Panc1 (cell line): ENCODE measurements at regions of chr10 and their contacts with region 1.

Region 1: DNA sequence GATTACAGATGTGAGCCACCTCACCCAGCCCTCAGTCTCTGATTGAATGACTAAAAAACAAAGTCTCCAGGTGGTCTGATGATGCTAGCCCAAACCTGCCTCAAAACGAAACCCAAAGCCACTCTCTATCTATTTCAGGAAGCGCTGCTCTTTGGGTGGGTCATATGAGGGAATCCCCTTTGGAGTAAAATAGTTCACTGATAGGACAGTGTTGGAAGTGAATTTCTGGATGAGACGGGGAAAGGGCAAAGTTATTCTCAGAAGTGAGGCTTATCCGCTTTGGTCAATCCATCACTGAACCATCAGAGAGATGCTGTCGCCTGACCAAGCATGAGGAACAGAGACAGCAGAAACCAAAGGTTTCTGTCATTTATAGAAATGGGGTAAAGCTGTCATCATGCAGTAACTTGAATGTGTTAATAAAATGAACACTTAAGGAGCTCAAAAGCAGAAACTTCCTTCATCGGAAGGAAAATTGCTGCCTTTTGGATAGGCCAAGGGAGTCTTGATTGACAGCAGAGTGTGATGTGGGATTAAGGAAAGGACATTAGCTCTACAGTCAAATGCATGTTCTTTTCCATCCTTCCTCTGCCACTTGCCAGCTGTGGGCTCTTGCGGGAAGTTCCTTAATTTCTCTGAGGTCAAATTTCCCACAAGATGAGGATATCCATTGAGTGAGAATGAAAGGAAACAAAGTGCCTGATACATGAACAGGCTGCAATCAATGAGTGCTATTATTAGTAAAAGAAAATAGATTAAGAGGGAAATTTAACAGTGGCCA is 64.9 kb upstream of the C1QL3 start:
- DNase-seq: no peak
- ATAC-seq: no peak
- H3K4me3 ChIP-seq: no peak overlapping the region
- H3K27ac ChIP-seq: no peak overlapping the region
- H3K4me1 ChIP-seq: no peaks in the 10 kb centered on the region
- H3K27me3 ChIP-seq: no peaks in the 10 kb centered on the region
- CTCF ChIP-seq: no peak

Region 2: GRCh38 chr10:16612115-16612980 is 25.8 kb after region 1 on chr10:
- CTCF ChIA-PET with region 1: no interaction called
- POLR2A ChIA-PET with region 1: interaction called, 12 read pairs
- in situ Hi-C with region 1: no loop called
- intact Hi-C with region 1: no loop called
- DNase-seq: no peak
- ATAC-seq: no peak
- H3K4me3 ChIP-seq: no peak overlapping the region
- H3K27ac ChIP-seq: no peak overlapping the region
- H3K4me1 ChIP-seq: no peaks in the 10 kb centered on the region
- H3K27me3 ChIP-seq: no peaks in the 10 kb centered on the region
- CTCF ChIP-seq: no peak

Region 3: DNA sequence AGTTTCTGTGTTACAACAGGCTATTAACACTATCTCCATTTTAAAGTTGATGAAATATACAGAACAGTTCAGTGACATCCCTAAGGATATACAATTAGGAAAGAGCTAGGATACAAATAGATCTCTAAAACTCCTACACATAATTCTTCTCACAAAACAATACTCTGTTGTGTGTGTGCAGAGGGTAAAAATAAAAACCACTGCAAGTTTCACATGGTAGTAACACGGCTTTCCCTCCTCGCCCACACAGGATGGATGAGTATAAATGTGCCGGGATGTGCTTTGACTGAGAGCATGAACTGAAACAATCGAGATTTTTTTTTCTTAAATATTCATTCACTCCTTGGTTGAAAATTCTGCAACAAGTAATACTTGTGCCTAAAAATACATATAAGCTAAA is 66.7 kb after region 1 on chr10:
- CTCF ChIA-PET with region 1: no interaction called
- POLR2A ChIA-PET with region 1: interaction called, 20 read pairs
- in situ Hi-C with region 1: no loop called
- intact Hi-C with region 1: no loop called
- DNase-seq: no peak
- ATAC-seq: no peak
- H3K4me3 ChIP-seq: no peak overlapping the region
- H3K27ac ChIP-seq: no peak overlapping the region
- H3K4me1 ChIP-seq: no peaks in the 10 kb centered on the region
- H3K27me3 ChIP-seq: no peaks in the 10 kb centered on the region
- CTCF ChIP-seq: no peak

Region 4: GRCh38 chr10:17175551-17175950 is 589.0 kb after region 1 on chr10:
- CTCF ChIA-PET with region 1: no interaction called
- POLR2A ChIA-PET with region 1: no interaction called
- in situ Hi-C with region 1: no loop called
- intact Hi-C with region 1: no loop called
- DNase-seq: no peak
- ATAC-seq: peak; percentile 78
- H3K4me3 ChIP-seq: peak overlapping the region in 1 of 2 experiments; percentile 13; a peak in 3 of 4 replicates
- H3K27ac ChIP-seq: peak overlapping the region; percentile 93
- H3K4me1 ChIP-seq: peaks cover 37% of the 10 kb centered on the region
- H3K27me3 ChIP-seq: no peaks in the 10 kb centered on the region
- CTCF ChIP-seq: no peak